Activated CD4-positive, alpha-beta T cell treated with anti-CD3 and anti-CD28 coated beads, Interleukin-2, amount 10 ng/mL, durations not matched to agents 24 days and 14 days (primary cell): ENCODE measurements at regions of chr4 and their contacts with region 1.

Region 1: DNA sequence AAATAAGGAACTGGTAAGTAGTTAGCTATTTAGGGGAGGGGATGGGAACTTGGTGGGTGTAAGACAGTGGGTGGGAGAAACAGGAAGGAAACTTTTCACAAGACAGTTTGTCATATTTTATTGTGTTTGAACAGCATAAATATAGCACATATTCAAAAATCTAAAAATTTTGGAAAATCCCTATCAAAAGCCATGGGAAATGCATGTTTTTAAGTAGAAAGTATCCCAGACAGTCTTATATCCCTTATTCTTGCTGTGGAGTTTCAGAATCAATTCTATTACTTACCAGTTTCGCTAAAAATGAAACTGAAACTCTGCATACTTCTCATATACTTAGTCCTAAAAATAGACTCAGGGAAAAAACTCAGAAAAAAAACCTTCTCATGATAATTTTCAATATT is 22.3 kb upstream of the RASGEF1B start:
- DNase-seq: no peak
- H3K4me3 Mint-ChIP-seq: peak overlapping the region; percentile 70
- H3K27ac Mint-ChIP-seq: peak overlapping the region; percentile 72
- H3K4me1 Mint-ChIP-seq: peaks cover 37% of the 10 kb centered on the region
- H3K27me3 Mint-ChIP-seq: peaks cover 1% of the 10 kb centered on the region

Region 2: GRCh38 chr4:81505004-81505598 is 11.1 kb after region 1 on chr4:
- intact Hi-C with region 1: loop called (anchors 1 kb)
- DNase-seq: peak; percentile 88
- H3K4me3 Mint-ChIP-seq: peak overlapping the region; percentile 61
- H3K27ac Mint-ChIP-seq: peak overlapping the region; percentile 23
- H3K4me1 Mint-ChIP-seq: peaks cover 29% of the 10 kb centered on the region
- H3K27me3 Mint-ChIP-seq: peaks cover 9% of the 10 kb centered on the region

Region 3: DNA sequence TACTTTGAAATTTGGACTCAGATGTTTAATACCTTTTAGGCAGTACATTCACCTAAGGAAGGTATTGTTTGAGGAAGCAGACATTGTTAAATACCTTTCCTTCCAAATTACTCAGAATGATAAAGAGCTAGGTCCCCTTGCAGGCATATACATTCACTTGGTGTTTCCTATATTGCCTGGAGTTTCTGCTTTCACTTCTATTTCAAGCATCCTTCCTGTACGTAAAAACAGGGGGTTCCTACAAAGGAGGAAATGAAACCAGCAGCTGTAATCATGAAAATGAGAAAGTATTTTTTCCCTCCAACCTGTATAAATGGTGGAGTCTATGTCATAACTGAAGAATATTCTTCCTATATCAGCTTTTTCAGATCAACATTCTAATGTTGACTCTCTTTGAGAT is 68.1 kb after region 1 on chr4:
- intact Hi-C with region 1: loop called (anchors 5 kb)
- DNase-seq: peak; percentile 64
- H3K4me3 Mint-ChIP-seq: no peak overlapping the region
- H3K27ac Mint-ChIP-seq: no peak overlapping the region
- H3K4me1 Mint-ChIP-seq: peaks cover 9% of the 10 kb centered on the region
- H3K27me3 Mint-ChIP-seq: no peaks in the 10 kb centered on the region